Transverse colon (tissue), 4 donors: ENCODE measurements at regions of chr1 and their contacts with region 1.

Region 1: GRCh38 chr1:75870951-75871350 is 61.3 kb downstream of the ASB17 start:
- DNase-seq: no peak
- H3K4me3 ChIP-seq: no peak overlapping the region
- H3K27ac ChIP-seq: no peak overlapping the region
- H3K4me1 ChIP-seq: no peaks in the 10 kb centered on the region
- H3K27me3 ChIP-seq: no peaks in the 10 kb centered on the region
- CTCF ChIP-seq: no peak
- EP300 ChIP-seq: no peak
- POLR2A ChIP-seq: no peak

Region 2: GRCh38 chr1:75838079-75838478 is 32.9 kb before region 1 on chr1:
- in situ Hi-C with region 1: no loop called
- intact Hi-C with region 1: loop called (anchors 2 kb)
- DNase-seq: no peak
- H3K4me3 ChIP-seq: no peak overlapping the region
- H3K27ac ChIP-seq: no peak overlapping the region
- H3K4me1 ChIP-seq: no peaks in the 10 kb centered on the region
- H3K27me3 ChIP-seq: no peaks in the 10 kb centered on the region
- CTCF ChIP-seq: no peak
- EP300 ChIP-seq: no peak
- POLR2A ChIP-seq: no peak